ENCODE measurements at regions of chr6 and their contacts with region 1.

Region 1: DNA sequence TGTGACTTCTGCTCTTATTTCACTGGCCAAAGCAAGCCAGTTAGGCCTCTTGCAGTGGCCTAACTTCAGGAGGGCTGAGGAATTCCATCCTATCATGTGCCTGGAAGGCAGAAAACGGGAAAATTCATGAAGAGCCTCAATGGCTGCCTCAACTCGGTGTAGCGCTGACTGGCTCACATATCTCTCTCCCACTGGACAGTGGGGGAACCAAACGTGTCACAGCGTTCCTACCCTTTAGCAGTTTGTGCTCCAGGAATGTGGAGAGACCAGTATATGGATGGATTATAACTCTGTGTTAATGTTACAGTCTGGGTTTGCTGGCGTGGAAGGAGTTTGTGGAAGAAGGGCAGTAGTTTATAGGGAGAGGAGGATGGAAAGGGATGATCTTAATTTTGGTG is 11.8 kb upstream of the C2 start:
- DNase-seq: no peak
- ATAC-seq: no peak
- H3K4me3 ChIP-seq: no peak overlapping the region
- H3K27ac ChIP-seq: no peak overlapping the region
- H3K4me1 ChIP-seq: no peaks in the 10 kb centered on the region
- H3K27me3 ChIP-seq: no peaks in the 10 kb centered on the region
- CTCF ChIP-seq: no peak

Region 2: DNA sequence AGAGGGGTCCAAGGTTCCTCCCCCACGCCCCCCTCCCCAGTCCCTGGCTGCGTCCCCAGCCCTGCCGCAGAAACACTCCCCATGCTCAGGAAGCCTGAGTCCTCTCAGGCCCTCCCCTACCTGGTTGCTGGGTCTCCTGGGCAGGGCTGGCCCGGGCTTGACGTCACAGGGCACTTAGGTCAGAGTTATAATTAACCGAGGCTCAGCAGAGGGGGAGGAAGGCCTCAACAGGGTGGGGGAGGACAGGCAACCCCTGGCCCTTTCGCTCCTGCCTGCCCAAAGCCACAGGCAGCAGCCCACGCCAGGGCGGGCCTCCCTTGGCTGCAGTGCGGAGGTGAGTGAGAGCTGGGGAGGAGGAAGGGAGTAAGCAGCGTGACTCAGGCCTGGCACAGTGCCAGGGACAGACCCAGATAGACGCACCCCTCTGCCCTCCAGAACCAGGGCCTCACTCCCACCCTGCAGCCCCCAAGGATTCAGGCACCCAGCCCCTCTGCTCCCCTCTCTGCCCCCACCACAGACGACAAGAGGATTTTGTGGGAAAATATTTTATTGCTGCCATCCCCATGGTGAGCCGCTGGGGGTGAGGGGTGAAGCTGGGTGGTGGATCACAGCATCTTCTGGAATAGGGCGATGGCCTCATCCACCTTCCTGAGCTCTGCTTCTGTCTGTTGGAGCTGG is 138.6 kb before region 1 on chr6 and contains the start of gene VWA7:
- CTCF ChIA-PET with region 1: no interaction called
- POLR2A ChIA-PET with region 1: interaction called, 11 read pairs
- in situ Hi-C with region 1: no loop called
- intact Hi-C with region 1: no loop called
- DNase-seq: no peak
- ATAC-seq: peak; percentile 79
- H3K4me3 ChIP-seq: peak within 1 kb of the TSS in 1 of 2 experiments; percentile 3; a peak in 1 of 4 replicates
- H3K27ac ChIP-seq: peak within 1 kb of the TSS; percentile 74
- H3K4me1 ChIP-seq: peaks cover 31% of the 10 kb centered on the region
- H3K27me3 ChIP-seq: no peaks in the 10 kb centered on the region
- CTCF ChIP-seq: no peak
- total RNA-seq, gene VWA7: 4.3 TPM

Measured in Panc1 (cell line).